ENCODE measurements at regions of chrX and their contacts with region 1.

Region 1: GRCh38 chrX:153927922-153928760 is 2.1 kb upstream of the ARHGAP4 start:
- DNase-seq: peak; percentile 84 to 87
- H3K4me3 ChIP-seq: peak overlapping the region; percentile 55 to 77 (median 62)
- H3K27ac ChIP-seq: peak overlapping the region; percentile 79
- H3K4me1 ChIP-seq: peaks cover 3 to 18% (median 12%) of the 10 kb centered on the region in 4 experiments
- H3K27me3 ChIP-seq: no peaks in the 10 kb centered on the region
- CTCF ChIP-seq: no peak
- EP300 ChIP-seq: no peak
- POLR2A ChIP-seq: peak in 1 of 2 experiments; percentile 55; a peak in 2 of 3 replicates
- RAD21 ChIP-seq: no peak

Region 2: GRCh38 chrX:153885968-153886903 is 41.9 kb before region 1 on chrX and contains the start of gene L1CAM:
- CTCF ChIA-PET with region 1: interaction called, 6 read pairs
- POLR2A ChIA-PET with region 1: interaction called, 13 read pairs
- DNase-seq: no peak
- H3K4me3 ChIP-seq: peak within 1 kb of the TSS; percentile 47 to 64 (median 50)
- H3K27ac ChIP-seq: no peak within 1 kb of the TSS
- H3K4me1 ChIP-seq: peaks cover 0 to 26% (median 15%) of the 10 kb centered on the region in 4 experiments; a peak in 6 of 7 replicates
- H3K27me3 ChIP-seq: peaks cover 0 to 17% (median under 1%) of the 10 kb centered on the region in 4 experiments; a peak in 3 of 7 replicates
- CTCF ChIP-seq: no peak
- EP300 ChIP-seq: no peak
- POLR2A ChIP-seq: no peak
- RAD21 ChIP-seq: no peak
- total RNA-seq, gene L1CAM: 38.7 and 43.0 TPM in 2 replicates

Region 3: GRCh38 chrX:153909024-153909970 is 18.8 kb before region 1 on chrX:
- CTCF ChIA-PET with region 1: interaction called, 65 read pairs
- POLR2A ChIA-PET with region 1: interaction called, 10 read pairs
- DNase-seq: no peak
- H3K4me3 ChIP-seq: no peak overlapping the region
- H3K27ac ChIP-seq: no peak overlapping the region
- H3K4me1 ChIP-seq: peaks cover 0 to 3% (median 0%) of the 10 kb centered on the region in 4 experiments; a peak in 1 of 7 replicates
- H3K27me3 ChIP-seq: no peaks in the 10 kb centered on the region
- CTCF ChIP-seq: no peak
- EP300 ChIP-seq: no peak
- POLR2A ChIP-seq: no peak
- RAD21 ChIP-seq: no peak

Region 4: GRCh38 chrX:153989973-153990655 is 62.0 kb after region 1 on chrX:
- CTCF ChIA-PET with region 1: no interaction called
- POLR2A ChIA-PET with region 1: no interaction called
- DNase-seq: no peak
- H3K4me3 ChIP-seq: no peak overlapping the region
- H3K27ac ChIP-seq: no peak overlapping the region
- H3K4me1 ChIP-seq: no peaks in the 10 kb centered on the region
- H3K27me3 ChIP-seq: no peaks in the 10 kb centered on the region
- CTCF ChIP-seq: no peak
- EP300 ChIP-seq: no peak
- POLR2A ChIP-seq: no peak
- RAD21 ChIP-seq: no peak

Measured in H1 (cell line).